OCI-LY7 (cell line): ENCODE measurements at regions of chr18 and their contacts with region 1.

Region 1: DNA sequence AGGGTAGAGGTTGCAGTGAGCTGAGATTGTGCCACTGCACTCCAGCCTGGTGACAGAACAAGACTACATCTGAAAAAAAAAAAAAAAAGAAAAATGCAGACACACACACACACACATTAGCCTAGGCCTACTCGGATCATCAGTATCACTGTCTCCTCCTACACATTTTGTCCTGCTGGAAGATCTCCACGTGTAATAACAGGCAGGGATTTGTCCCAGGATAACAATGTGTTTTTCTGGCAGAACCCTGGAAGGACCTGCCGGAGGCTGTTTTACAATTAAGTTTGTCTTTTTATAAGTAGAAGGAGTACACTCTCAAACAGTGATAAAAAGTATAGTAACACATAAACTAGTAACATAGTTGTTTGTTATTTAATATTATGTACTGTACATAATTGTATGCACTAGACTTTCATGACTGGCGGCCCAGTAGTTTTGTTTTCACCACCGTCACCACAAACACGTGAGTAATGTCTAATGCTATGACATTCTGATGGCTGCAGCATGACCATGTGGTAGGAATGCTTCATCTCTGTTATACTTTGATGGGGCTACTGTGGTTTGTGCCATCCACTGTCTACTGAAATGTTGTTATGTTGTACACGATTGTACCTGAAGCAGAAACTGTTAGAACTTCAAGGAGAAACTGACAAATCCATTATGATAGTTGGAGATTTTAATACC is 130.6 kb downstream of the ATP9B start:
- DNase-seq: no peak
- H3K4me3 ChIP-seq: no peak overlapping the region
- H3K27ac ChIP-seq: no peak overlapping the region
- H3K4me1 ChIP-seq: peaks cover 62% of the 10 kb centered on the region
- CTCF ChIP-seq: no peak

Region 2: DNA sequence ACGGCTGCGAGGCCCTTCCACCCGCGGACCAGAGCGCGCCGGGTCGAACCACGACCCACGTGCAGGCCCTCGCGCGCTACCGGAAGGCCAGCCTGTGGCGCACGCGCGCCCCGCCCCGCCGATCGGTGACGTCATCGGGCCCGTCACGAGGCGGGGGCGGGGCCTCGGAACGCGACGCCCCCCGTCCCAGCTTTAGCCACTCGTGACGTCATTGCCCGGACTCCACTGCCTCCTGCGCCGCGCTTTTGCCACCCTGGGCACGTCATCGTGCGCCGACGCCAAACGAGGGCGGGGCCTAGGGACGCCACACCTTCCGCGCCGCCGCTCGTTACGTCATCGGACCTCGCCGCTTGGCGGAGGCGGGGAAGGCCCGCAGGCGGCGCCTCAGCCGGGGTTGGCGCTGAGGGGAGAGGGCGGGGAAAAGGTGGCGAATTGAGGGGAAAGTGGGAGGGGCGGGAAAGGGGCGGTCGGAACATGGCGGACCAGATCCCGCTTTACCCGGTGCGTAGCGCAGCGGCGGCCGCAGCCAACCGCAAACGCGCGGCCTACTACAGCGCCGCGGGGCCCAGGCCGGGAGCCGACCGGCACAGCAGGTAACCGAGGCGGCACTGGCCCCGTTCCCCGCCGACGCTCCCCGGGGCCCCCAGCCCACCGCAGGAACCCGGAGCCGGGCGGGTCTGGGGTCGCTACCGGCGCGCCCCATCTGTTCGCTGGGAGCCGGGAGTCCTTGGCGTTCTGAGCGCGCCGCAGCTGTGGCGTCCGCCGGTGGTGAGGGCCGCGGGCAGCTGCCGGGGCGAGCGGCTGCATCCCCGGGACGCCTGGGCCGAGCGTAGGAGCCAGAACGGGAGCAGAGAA is 130.7 kb before region 1 on chr18 and contains the start of gene ATP9B:
- CTCF ChIA-PET with region 1: no interaction called
- POLR2A ChIA-PET with region 1: no interaction called
- intact Hi-C with region 1: loop called (anchors 5 kb)
- DNase-seq: peak; percentile 90
- H3K4me3 ChIP-seq: peak within 1 kb of the TSS; percentile 94
- H3K27ac ChIP-seq: peak within 1 kb of the TSS; percentile 58
- H3K4me1 ChIP-seq: peaks cover 10% of the 10 kb centered on the region
- CTCF ChIP-seq: no peak
- total RNA-seq, gene ATP9B: 22.2 and 27.1 TPM in 2 replicates

Region 3: DNA sequence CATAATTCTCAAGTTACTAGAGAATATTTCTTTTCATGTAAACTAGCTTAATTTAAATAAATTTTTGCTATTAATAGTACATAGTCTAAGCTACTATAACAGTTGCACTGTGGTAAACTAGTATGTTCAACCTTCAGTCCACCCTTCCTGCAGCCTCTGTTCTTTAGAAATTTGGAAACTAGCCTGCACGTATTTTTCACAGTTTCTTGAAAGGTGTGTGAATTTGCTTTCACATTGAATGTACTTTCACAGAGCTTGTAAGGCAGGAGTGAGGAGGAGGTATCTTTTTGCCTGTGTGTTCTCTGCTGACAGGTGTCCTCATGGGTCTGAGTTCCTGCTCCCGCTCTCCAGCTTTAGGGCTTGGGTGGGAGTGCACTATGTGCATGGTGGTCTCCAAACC is 13.2 kb before region 1 on chr18:
- CTCF ChIA-PET with region 1: no interaction called
- POLR2A ChIA-PET with region 1: interaction called, 11 read pairs
- intact Hi-C with region 1: no loop called
- DNase-seq: no peak
- H3K4me3 ChIP-seq: peak overlapping the region; percentile 2
- H3K27ac ChIP-seq: peak overlapping the region; percentile 54
- H3K4me1 ChIP-seq: peaks cover 76% of the 10 kb centered on the region
- CTCF ChIP-seq: no peak